ENCODE measurements at regions of chr6 and their contacts with region 1.

Region 1: GRCh38 chr6:12957321-12958051 is 240.9 kb downstream of the PHACTR1 start:
- DNase-seq: peak; percentile 26 to 82 (median 74)
- H3K4me3 ChIP-seq: peak overlapping the region; percentile 53 to 92 (median 75)
- H3K27ac ChIP-seq: peak overlapping the region; percentile 20 to 96 (median 87)
- H3K27me3 ChIP-seq: no peaks in the 10 kb centered on the region
- CTCF ChIP-seq: peak in 15 of 56 donors; percentile 4 to 40 (median 18)

Region 2: GRCh38 chr6:12735786-12736185 is 221.7 kb before region 1 on chr6:
- intact Hi-C with region 1: no loop called
- DNase-seq: no peak
- H3K4me3 ChIP-seq: no peak overlapping the region
- H3K27ac ChIP-seq: no peak overlapping the region
- H3K27me3 ChIP-seq: peaks cover 0 to 3% (median 0%) of the 10 kb centered on the region in 45 donors
- CTCF ChIP-seq: no peak

Region 3: DNA sequence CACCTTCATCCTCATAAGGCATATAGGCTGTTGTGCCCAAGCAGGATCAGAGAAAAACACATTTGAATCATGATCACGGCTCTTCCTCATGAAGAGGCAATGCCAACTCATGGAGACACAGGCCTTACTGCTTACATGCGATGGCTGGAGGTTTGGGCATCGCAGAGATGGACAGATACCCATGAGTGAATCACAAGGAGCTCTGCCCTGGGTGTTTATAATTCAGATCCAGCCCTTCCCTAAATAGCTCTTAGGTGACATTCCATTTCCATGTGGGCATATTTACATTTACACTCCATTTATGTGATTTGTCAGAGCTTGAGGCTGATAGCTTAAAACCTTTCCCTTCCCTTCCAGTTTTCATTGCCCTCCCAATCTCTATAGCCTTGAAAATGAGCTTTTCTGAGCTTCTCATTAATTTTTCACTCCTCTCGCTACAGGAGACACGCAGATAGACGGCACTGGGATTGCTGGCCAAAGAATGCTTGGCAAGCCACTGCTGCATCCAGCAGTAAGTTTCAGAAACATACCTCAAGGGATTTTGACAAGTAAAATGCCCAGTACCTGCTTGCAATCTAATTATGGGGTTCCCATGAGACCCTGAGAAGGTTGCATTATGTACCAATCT is 121.7 kb after region 1 on chr6:
- intact Hi-C with region 1: loop called in 1 of 2 experiments (anchors 10 kb)
- DNase-seq: no peak
- H3K4me3 ChIP-seq: no peak overlapping the region
- H3K27ac ChIP-seq: peak overlapping the region in 25 of 59 donors; percentile 0 to 86 (median 28)
- H3K27me3 ChIP-seq: no peaks in the 10 kb centered on the region
- CTCF ChIP-seq: no peak